A549 (cell line): ENCODE measurements at regions of chr10 and their contacts with region 1.

Region 1: GRCh38 chr10:100817268-100817839 is 72.0 kb downstream of the PAX2 start:
- DNase-seq: no peak
- ATAC-seq: peak; percentile 17 to 75; a peak in 3 of 6 replicates
- H3K4me3 ChIP-seq: no peak overlapping the region
- H3K27ac ChIP-seq: no peak overlapping the region
- H3K4me1 ChIP-seq: no peaks in the 10 kb centered on the region
- CTCF ChIP-seq: no peak
- EP300 ChIP-seq: no peak
- POLR2A ChIP-seq: no peak
- RAD21 ChIP-seq: 0 out of 5 replicates have a peak, but pooled peaks of 1 of the 2 experiments have one; percentile 42

Region 2: DNA sequence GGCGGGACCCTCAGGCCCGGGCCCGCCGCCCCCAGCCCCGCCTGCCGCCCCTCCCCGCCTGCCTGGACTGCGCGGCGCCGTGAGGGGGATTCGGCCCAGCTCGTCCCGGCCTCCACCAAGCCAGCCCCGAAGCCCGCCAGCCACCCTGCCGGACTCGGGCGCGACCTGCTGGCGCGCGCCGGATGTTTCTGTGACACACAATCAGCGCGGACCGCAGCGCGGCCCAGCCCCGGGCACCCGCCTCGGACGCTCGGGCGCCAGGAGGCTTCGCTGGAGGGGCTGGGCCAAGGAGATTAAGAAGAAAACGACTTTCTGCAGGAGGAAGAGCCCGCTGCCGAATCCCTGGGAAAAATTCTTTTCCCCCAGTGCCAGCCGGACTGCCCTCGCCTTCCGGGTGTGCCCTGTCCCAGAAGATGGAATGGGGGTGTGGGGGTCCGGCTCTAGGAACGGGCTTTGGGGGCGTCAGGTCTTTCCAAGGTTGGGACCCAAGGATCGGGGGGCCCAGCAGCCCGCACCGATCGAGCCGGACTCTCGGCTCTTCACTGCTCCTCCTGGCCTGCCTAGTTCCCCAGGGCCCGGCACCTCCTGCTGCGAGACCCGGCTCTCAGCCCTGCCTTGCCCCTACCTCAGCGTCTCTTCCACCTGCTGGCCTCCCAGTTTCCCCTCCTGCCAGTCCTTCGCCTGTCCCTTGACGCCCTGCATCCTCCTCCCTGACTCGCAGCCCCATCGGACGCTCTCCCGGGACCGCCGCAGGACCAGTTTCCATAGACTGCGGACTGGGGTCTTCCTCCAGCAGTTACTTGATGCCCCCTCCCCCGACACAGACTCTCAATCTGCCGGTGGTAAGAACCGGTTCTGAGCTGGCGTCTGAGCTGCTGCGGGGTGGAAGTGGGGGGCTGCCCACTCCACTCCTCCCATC is 10.7 kb after region 1 on chr10:
- CTCF ChIA-PET with region 1: interaction called, 25 read pairs
- POLR2A ChIA-PET with region 1: interaction called, 3 read pairs
- DNase-seq: peak; percentile 43 to 75
- ATAC-seq: peak; percentile 72 to 78
- H3K4me3 ChIP-seq: peak overlapping the region; percentile 50
- H3K27ac ChIP-seq: peak overlapping the region; percentile 34 to 80; a peak in 5 of 6 replicates
- H3K4me1 ChIP-seq: 0 out of 3 replicates have a peak, but pooled peaks cover 5% of the 10 kb centered on the region
- CTCF ChIP-seq: peak; percentile 30
- EP300 ChIP-seq: no peak
- POLR2A ChIP-seq: no peak
- RAD21 ChIP-seq: peak in 1 of 2 experiments; percentile 32; a peak in 1 of 5 replicates